ENCODE measurements at regions of chr15 and their contacts with region 1.

Region 1: DNA sequence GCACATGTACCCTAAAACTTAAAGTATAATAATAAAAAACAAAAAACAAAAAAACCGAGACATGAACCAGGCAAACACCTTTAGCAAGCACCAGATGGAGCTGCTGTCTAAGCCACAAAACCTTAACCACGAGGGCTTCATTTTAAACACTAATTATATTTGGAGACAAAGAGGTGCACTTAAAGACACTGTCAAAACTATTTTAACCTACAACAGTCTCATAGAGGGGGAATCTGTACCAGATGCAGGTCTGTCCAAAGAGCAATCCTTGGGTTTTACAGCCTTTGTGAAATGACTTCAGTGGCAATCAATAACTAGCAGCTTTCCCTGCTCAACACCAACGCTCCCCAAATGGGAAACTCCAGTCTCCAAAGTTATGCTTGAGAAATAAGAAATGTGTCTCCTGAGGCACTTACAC is 115.7 kb upstream of the TSPAN3 start:
- DNase-seq: no peak
- H3K4me3 Mint-ChIP-seq: no peak overlapping the region
- H3K27ac Mint-ChIP-seq: peak overlapping the region; percentile 37
- H3K4me1 Mint-ChIP-seq: peaks cover 69% of the 10 kb centered on the region
- H3K27me3 Mint-ChIP-seq: no peaks in the 10 kb centered on the region

Region 2: GRCh38 chr15:76235186-76235826 is 951.3 kb before region 1 on chr15:
- intact Hi-C with region 1: no loop called
- DNase-seq: no peak
- H3K4me3 Mint-ChIP-seq: no peak overlapping the region
- H3K27ac Mint-ChIP-seq: no peak overlapping the region
- H3K4me1 Mint-ChIP-seq: no peaks in the 10 kb centered on the region
- H3K27me3 Mint-ChIP-seq: no peaks in the 10 kb centered on the region

Region 3: DNA sequence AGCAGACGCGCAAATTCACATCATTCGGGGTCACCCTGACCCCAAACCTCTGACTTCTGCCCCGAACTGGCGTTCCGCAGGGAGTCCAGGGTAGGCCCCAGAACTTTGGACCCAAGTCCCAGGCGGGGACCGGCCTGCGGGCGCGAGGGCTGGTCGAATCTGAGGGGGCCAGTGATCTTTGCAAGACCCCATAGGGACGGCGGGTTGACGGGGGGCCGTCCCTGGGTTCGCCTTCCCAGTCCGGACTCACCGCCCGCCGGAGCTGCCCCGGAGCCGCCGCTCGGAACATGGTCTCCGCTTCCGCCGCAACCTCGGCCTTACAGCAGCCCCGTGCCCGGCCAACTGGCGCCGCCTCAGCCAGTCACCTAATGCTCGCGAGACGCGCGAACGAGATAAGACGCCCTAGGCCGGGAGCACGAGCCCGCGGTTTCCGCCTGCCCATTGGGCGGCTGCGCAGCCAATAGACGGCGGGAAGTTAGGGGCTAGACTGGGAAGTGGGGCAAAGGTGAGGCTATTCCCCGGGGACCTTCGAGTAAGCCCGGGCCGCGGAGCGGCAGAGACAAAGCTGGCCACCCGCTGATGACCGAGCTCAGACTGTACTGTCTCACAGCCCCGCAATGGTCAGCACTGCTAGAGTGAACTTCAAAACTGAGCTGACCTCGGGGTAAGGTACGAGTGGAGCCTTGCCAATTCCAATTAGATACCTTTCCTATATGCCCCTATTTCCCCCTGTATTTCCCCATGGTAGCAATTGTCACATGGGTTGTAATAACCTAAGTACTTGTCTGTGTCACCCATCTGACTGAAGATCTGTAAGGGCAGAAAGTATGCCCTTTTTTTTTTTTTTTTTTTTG is 875.3 kb before region 1 on chr15 and contains the start of gene ETFA:
- intact Hi-C with region 1: loop called (anchors 2 kb)
- DNase-seq: peak; percentile 88
- H3K4me3 Mint-ChIP-seq: peak within 1 kb of the TSS; percentile 90
- H3K27ac Mint-ChIP-seq: peak within 1 kb of the TSS; percentile 82
- H3K4me1 Mint-ChIP-seq: peaks cover 31% of the 10 kb centered on the region
- H3K27me3 Mint-ChIP-seq: peaks cover 11% of the 10 kb centered on the region
- total RNA-seq, gene ETFA: 129 and 133 TPM in 2 replicates

Region 4: GRCh38 chr15:77118882-77119321 is 67.7 kb before region 1 on chr15:
- intact Hi-C with region 1: loop called (anchors 2 kb)
- DNase-seq: peak; percentile 15
- H3K4me3 Mint-ChIP-seq: no peak overlapping the region
- H3K27ac Mint-ChIP-seq: no peak overlapping the region
- H3K4me1 Mint-ChIP-seq: peaks cover 4% of the 10 kb centered on the region
- H3K27me3 Mint-ChIP-seq: peaks cover 6% of the 10 kb centered on the region

Region 5: GRCh38 chr15:77409259-77410156 is 222.9 kb after region 1 on chr15:
- intact Hi-C with region 1: loop called (anchors 10 kb)
- DNase-seq: peak; percentile 39
- H3K4me3 Mint-ChIP-seq: peak overlapping the region; percentile 72
- H3K27ac Mint-ChIP-seq: peak overlapping the region; percentile 89
- H3K4me1 Mint-ChIP-seq: peaks cover 47% of the 10 kb centered on the region
- H3K27me3 Mint-ChIP-seq: no peaks in the 10 kb centered on the region

Region 6: DNA sequence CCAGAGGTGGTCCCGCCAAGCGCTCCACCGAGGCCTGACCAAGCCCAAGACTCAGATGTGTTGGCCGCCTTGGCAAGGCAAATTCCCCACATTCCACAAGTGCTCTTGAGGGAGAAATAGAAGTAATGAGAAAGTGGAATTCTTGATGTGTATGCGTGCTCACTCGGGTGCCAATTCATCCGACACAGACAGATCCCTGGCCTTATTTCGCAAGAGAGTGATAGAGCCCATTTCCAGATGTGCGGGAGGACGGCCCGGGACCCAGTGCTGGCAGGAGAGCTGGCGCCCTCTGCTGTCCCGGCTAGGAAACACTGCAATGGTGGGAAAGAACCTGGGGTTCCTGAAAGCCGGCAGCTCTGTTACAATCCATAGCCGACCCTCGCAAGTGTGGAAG is 310.1 kb after region 1 on chr15:
- intact Hi-C with region 1: loop called (anchors 1 kb)
- DNase-seq: peak; percentile 54
- H3K4me3 Mint-ChIP-seq: no peak overlapping the region
- H3K27ac Mint-ChIP-seq: no peak overlapping the region
- H3K4me1 Mint-ChIP-seq: peaks cover 20% of the 10 kb centered on the region
- H3K27me3 Mint-ChIP-seq: no peaks in the 10 kb centered on the region

Region 7: DNA sequence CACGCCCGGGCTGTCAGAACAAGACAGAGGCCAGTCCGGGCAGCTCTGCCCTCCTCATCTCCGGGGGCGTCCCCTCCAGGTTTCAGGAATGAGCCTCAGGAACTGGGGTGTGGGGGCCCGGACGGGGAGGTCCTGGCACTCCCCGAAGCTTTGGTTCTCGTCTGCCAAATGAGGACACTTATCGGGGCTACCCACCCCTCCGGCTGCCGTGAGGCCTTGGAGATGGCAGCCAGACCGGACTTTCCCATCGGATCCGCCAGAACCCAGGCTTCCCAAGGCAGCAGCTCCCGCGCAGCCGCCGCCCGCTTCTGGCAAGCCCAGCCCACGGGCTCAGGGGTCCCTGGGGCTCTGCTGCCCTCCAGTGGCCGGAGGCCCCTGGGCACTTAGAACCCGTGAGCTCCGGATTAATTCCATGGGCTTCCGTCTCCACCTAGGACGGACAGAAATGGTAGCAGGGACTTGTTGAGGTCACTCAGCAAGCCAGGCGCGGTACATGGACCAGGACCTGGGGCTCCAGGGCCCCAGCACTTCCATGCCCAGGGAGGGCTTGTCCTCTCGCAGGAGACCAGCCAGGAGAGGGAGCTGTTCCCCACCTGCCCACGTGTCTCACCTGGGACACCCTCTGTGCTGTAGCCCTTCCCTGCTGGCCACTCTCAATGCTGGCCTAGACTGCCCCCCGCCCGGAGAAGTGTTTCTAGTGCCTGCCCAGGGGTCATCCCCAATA is 356.7 kb after region 1 on chr15:
- intact Hi-C with region 1: loop called (anchors 1 kb)
- DNase-seq: peak; percentile 64
- H3K4me3 Mint-ChIP-seq: peak overlapping the region; percentile 76
- H3K27ac Mint-ChIP-seq: no peak overlapping the region
- H3K4me1 Mint-ChIP-seq: peaks cover 8% of the 10 kb centered on the region
- H3K27me3 Mint-ChIP-seq: peaks cover 15% of the 10 kb centered on the region